Activated CD4-positive, alpha-beta memory T cell treated with anti-CD3 and anti-CD28 coated beads, Interleukin-2, amount 10 ng/mL, durations not matched to agents 7 days and 5 days (primary cell): ENCODE measurements at regions of chr11 and their contacts with region 1.

Region 1: GRCh38 chr11:62855571-62856332 is 16.4 kb upstream of the WDR74 start:
- DNase-seq: peak; percentile 99
- H3K4me3 Mint-ChIP-seq: peak overlapping the region; percentile 97
- H3K27ac Mint-ChIP-seq: peak overlapping the region; percentile 96
- H3K4me1 Mint-ChIP-seq: peaks cover 75% of the 10 kb centered on the region
- H3K27me3 Mint-ChIP-seq: no peaks in the 10 kb centered on the region

Region 2: GRCh38 chr11:62601394-62602140 is 254.2 kb before region 1 on chr11 and contains the start of gene MTA2:
- CTCF ChIA-PET with region 1: no interaction called
- POLR2A ChIA-PET with region 1: interaction called, 17 read pairs
- DNase-seq: peak; percentile 100
- H3K4me3 Mint-ChIP-seq: peak within 1 kb of the TSS; percentile 85
- H3K27ac Mint-ChIP-seq: peak within 1 kb of the TSS; percentile 88
- H3K4me1 Mint-ChIP-seq: peaks cover 53% of the 10 kb centered on the region
- H3K27me3 Mint-ChIP-seq: no peaks in the 10 kb centered on the region
- total RNA-seq, gene MTA2: 226 TPM

Region 3: GRCh38 chr11:62705880-62706849 is 149.6 kb before region 1 on chr11:
- CTCF ChIA-PET with region 1: no interaction called
- POLR2A ChIA-PET with region 1: interaction called, 30 read pairs
- DNase-seq: peak; percentile 96
- H3K4me3 Mint-ChIP-seq: peak overlapping the region; percentile 92
- H3K27ac Mint-ChIP-seq: peak overlapping the region; percentile 69
- H3K4me1 Mint-ChIP-seq: peaks cover 56% of the 10 kb centered on the region
- H3K27me3 Mint-ChIP-seq: no peaks in the 10 kb centered on the region

Region 4: DNA sequence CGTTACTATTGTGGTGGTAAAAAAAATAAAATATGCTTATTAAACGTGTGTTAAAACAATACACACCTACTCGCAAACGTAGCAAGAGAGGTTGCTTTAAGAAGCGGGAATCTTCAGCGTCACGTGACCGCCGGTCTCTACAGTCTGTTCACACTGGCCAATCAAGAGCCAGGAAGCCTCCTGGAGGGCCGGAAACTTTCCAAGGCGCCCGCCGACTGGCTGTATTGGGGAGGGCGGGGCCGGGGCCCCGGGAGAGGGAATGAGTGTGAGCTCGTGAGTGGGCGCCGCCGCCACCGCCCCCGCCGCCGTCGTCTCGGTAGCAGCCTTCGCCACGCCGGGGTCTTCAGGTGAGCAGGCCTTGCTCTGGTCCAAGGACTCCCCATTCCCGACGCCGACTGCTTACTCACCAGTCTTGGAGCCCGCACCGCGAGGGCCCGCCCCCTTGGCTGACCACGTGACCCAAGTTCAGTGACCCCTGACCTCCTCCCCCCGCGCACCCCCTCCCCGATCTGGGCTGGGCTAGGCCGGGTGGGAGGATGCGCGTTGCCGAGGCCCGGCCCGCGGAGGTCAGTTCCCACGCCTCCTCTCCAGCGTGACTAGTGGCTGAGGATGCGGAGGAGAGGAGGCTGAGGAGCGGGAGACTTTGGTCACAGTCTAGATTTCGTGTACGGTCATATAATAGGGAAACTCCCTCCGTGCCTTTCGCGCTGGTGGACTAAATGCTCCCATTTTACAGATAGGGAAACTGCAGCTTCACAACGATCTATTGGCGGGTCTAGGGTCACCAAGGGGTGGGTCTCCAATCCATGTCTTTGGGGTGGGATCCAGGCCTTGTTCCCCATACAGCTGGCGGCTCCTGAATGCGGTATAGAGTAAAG is 84.4 kb before region 1 on chr11 and contains the start of gene TAF6L:
- CTCF ChIA-PET with region 1: interaction called, 4 read pairs
- POLR2A ChIA-PET with region 1: interaction called, 10 read pairs
- DNase-seq: peak; percentile 96
- H3K4me3 Mint-ChIP-seq: peak within 1 kb of the TSS; percentile 87
- H3K27ac Mint-ChIP-seq: peak within 1 kb of the TSS; percentile 88
- H3K4me1 Mint-ChIP-seq: peaks cover 30% of the 10 kb centered on the region
- H3K27me3 Mint-ChIP-seq: no peaks in the 10 kb centered on the region
- total RNA-seq, gene TAF6L: 15.2 to 16.0 TPM

Region 5: GRCh38 chr11:62831520-62832335 is 24.0 kb before region 1 on chr11 and contains the start of gene STX5:
- CTCF ChIA-PET with region 1: interaction called, 12 read pairs
- POLR2A ChIA-PET with region 1: interaction called, 47 read pairs
- DNase-seq: peak; percentile 100
- H3K4me3 Mint-ChIP-seq: peak within 1 kb of the TSS; percentile 84
- H3K27ac Mint-ChIP-seq: peak within 1 kb of the TSS; percentile 91
- H3K4me1 Mint-ChIP-seq: peaks cover 33% of the 10 kb centered on the region
- H3K27me3 Mint-ChIP-seq: no peaks in the 10 kb centered on the region
- total RNA-seq, gene STX5: 40.6 to 41.6 TPM

Region 6: DNA sequence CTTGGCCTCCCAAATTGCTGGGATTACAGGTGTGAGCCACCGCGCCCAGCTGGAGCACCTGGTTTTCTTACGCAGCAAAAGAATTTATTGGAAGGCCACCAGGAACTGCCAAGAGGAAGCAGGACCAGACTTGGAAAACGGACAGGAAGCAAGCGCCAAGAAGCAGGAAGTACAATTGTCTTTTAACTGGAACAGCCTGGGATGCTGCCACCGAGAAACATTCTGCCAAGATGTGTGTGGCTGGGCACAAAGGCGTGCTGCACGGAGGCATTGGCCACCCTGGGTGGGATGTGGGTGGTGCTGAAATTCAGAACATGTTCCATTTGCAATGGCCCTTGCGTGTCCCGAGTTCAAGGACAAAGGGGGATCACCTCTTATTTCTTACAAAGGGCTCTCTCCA is 40.3 kb after region 1 on chr11:
- CTCF ChIA-PET with region 1: no interaction called
- POLR2A ChIA-PET with region 1: no interaction called
- DNase-seq: no peak
- H3K4me3 Mint-ChIP-seq: no peak overlapping the region
- H3K27ac Mint-ChIP-seq: no peak overlapping the region
- H3K4me1 Mint-ChIP-seq: no peaks in the 10 kb centered on the region
- H3K27me3 Mint-ChIP-seq: peaks cover 19% of the 10 kb centered on the region

Region 7: GRCh38 chr11:63165706-63166310 is 310.1 kb after region 1 on chr11:
- CTCF ChIA-PET with region 1: no interaction called
- POLR2A ChIA-PET with region 1: no interaction called
- DNase-seq: no peak
- H3K4me3 Mint-ChIP-seq: no peak overlapping the region
- H3K27ac Mint-ChIP-seq: no peak overlapping the region
- H3K4me1 Mint-ChIP-seq: no peaks in the 10 kb centered on the region
- H3K27me3 Mint-ChIP-seq: peaks cover 44% of the 10 kb centered on the region